Aorta (tissue), 5 donors: ENCODE measurements at regions of chr19 and their contacts with region 1.

Region 1: DNA sequence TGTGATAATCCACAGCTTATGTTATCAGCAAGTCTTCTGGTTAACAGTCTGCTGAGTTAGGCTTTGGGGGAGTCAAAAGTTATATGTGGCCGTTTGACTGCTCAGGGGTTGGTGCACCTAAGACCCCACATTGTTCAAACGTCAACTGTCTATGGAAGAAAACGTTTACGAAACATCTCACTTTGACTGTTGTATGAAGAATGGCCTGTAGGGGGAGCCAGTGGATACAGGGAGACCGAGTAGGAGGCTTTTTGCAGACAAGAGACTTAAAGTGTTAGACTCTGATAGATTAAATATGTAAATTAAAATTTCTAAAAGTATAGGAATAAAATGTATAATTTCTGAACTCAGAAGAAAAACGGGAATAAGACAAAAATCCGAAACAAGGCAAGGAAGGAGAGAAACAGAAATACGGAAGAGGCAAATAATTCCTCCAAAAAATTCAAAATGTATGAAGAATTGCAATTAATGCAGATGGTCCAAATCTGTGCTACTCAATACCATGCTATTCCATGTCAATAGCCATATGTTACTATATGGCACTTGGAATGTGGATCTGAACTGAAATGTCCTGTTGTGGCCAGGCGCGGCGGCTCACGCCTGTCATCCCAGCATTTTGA is 37.8 kb downstream of the TNFSF14 start:
- DNase-seq: no peak
- ATAC-seq: peak; percentile 79
- H3K4me3 ChIP-seq: no peak overlapping the region
- H3K27ac ChIP-seq: no peak overlapping the region
- H3K4me1 ChIP-seq: no peaks in the 10 kb centered on the region
- H3K27me3 ChIP-seq: no peaks in the 10 kb centered on the region

Region 2: DNA sequence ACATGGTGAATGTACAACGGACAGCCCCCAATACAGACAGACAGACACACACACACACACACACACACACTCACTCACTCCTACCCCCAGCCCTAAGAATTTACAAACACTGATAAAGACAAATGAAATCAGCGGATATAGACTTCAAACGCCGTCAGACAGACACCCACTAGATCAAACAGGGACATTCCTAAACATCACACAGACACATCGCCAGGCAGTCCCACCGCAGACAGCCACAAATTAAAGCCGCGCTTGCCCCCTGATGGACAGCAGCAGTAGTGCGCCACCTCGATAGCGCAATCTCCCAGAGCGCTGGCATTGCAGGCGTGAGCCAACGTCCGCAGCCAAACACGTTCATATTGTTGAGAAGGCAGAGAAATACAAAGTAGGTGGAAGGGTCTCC is 230.6 kb after region 1 on chr19:
- intact Hi-C with region 1: loop called (anchors 2 to 5 kb)
- DNase-seq: peak; percentile 89 to 92
- ATAC-seq: peak; percentile 93
- H3K4me3 ChIP-seq: no peak overlapping the region
- H3K27ac ChIP-seq: no peak overlapping the region
- H3K4me1 ChIP-seq: no peaks in the 10 kb centered on the region
- H3K27me3 ChIP-seq: no peaks in the 10 kb centered on the region